H1 (cell line): ENCODE measurements at regions of chr20 and their contacts with region 1.

Region 1: GRCh38 chr20:38730989-38731737 is 6.9 kb downstream of the SLC32A1 start:
- DNase-seq: peak in 1 of 2 experiments; percentile 99
- H3K4me3 ChIP-seq: peak overlapping the region; percentile 18 to 59 (median 36); a peak in 7 of 8 replicates
- H3K27ac ChIP-seq: no peak overlapping the region
- H3K4me1 ChIP-seq: peaks cover 0 to 46% (median 30%) of the 10 kb centered on the region in 4 experiments; a peak in 6 of 7 replicates
- H3K27me3 ChIP-seq: peaks cover 44 to 68% (median 62%) of the 10 kb centered on the region in 4 experiments
- CTCF ChIP-seq: peak; percentile 90 to 99 (median 98)
- EP300 ChIP-seq: peak in 1 of 2 experiments; percentile 40; a peak in 1 of 3 replicates
- POLR2A ChIP-seq: no peak
- RAD21 ChIP-seq: peak; percentile 51 to 61

Region 2: DNA sequence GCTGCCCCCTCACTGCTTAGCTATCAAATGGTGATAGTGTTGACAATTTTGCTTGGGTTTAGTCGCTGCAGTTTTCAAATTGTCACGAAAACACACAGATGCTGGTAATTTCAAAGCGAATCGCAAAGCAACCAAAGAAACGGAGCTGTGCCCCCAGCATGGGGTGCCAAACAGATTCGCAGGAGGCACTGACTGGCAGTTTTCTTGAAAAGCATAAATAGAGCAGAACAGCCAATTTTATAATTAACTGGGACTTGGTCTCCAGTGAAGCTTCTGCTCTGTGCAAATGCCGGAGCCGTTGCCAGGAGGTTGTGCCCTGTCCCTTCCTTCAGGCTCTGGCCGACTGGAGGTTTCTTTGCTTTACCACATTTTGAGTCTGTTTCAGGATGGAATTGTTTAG is 110.7 kb before region 1 on chr20:
- CTCF ChIA-PET with region 1: interaction called, 11 read pairs
- POLR2A ChIA-PET with region 1: no interaction called
- DNase-seq: no peak
- H3K4me3 ChIP-seq: no peak overlapping the region
- H3K27ac ChIP-seq: no peak overlapping the region
- H3K4me1 ChIP-seq: peaks cover 0 to 11% (median 8%) of the 10 kb centered on the region in 4 experiments; a peak in 5 of 7 replicates
- H3K27me3 ChIP-seq: no peaks in the 10 kb centered on the region; a peak in 1 of 7 replicates
- CTCF ChIP-seq: no peak
- EP300 ChIP-seq: no peak
- POLR2A ChIP-seq: no peak
- RAD21 ChIP-seq: no peak

Region 3: GRCh38 chr20:38645980-38646858 is 84.9 kb before region 1 on chr20:
- CTCF ChIA-PET with region 1: interaction called, 235 read pairs
- POLR2A ChIA-PET with region 1: interaction called, 3 read pairs
- DNase-seq: peak; percentile 36 to 98
- H3K4me3 ChIP-seq: peak overlapping the region in 3 of 4 experiments; percentile 30 to 48 (median 44); a peak in 6 of 8 replicates
- H3K27ac ChIP-seq: no peak overlapping the region
- H3K4me1 ChIP-seq: peaks cover 0 to 5% (median 3%) of the 10 kb centered on the region in 4 experiments; a peak in 5 of 7 replicates
- H3K27me3 ChIP-seq: peaks cover 8 to 43% (median 31%) of the 10 kb centered on the region in 4 experiments
- CTCF ChIP-seq: peak; percentile 95 to 97 (median 95)
- EP300 ChIP-seq: no peak
- POLR2A ChIP-seq: no peak
- RAD21 ChIP-seq: peak; percentile 92 to 95

Region 4: DNA sequence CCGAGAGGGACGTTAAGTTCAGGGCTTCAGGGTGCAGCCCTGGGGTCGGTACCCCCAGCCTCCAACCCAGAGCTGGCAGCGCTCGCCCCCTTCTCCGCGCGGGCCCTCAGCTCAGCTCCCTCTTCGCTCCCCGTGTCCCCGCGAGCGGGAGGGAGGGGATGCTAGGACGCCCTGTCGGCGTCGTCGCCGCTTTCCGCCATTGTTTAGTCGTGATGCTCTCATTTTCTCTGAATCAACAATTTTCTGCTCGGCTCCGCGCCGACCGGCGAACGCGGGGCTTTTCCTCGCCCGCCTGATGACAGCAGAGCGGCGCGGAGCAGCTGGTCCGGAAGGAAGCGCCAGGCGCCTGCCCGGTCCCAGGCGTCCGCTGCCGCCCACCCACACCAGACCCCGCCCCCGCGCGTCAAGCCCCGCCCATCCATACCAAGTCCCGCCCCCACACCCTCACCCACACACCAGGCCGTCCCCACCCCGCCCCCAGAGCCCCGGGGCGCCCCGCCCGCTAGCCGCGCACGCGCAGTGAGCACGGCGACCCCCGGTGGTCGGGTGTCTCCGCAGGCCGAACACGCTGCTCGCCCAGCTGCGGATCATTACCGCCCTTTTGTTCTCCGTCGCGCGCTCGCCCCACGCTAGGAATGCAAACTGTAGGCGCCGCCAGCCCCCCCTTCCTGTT is 56.9 kb before region 1 on chr20:
- CTCF ChIA-PET with region 1: interaction called, 42 read pairs
- POLR2A ChIA-PET with region 1: no interaction called
- DNase-seq: peak; percentile 71 to 91
- H3K4me3 ChIP-seq: peak overlapping the region; percentile 60 to 86 (median 69)
- H3K27ac ChIP-seq: no peak overlapping the region
- H3K4me1 ChIP-seq: peaks cover 2 to 17% (median 10%) of the 10 kb centered on the region in 4 experiments; a peak in 5 of 7 replicates
- H3K27me3 ChIP-seq: peaks cover 3 to 38% (median 18%) of the 10 kb centered on the region in 4 experiments
- CTCF ChIP-seq: no peak
- EP300 ChIP-seq: no peak
- POLR2A ChIP-seq: peak in 1 of 2 experiments; percentile 42; a peak in 1 of 3 replicates
- RAD21 ChIP-seq: no peak

Region 5: DNA sequence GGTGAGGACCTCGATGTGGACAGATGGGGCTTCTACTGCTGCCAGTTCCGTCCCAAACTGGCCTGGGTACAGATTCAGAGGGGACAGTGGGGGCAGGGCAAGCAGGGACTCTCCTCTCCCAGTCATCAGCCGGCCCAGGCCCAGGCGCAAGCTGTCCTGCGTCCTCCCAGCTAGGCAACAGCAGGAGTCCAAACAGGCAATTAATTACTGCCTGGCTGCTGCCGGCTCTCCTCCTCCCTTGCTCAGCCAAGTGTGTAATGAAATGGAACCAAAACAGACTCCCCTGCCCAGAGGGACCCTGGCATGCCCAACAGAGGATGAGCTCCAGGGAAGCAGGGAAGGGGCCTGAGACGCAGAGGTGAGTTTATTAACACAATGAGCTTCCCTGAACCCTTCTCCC is 24.7 kb before region 1 on chr20:
- CTCF ChIA-PET with region 1: interaction called, 236 read pairs
- POLR2A ChIA-PET with region 1: no interaction called
- DNase-seq: no peak
- H3K4me3 ChIP-seq: no peak overlapping the region
- H3K27ac ChIP-seq: no peak overlapping the region
- H3K4me1 ChIP-seq: peaks cover 0 to 7% (median 3%) of the 10 kb centered on the region in 4 experiments; a peak in 4 of 7 replicates
- H3K27me3 ChIP-seq: no peaks in the 10 kb centered on the region; a peak in 1 of 7 replicates
- CTCF ChIP-seq: no peak
- EP300 ChIP-seq: no peak
- POLR2A ChIP-seq: no peak
- RAD21 ChIP-seq: no peak

Region 6: GRCh38 chr20:38805502-38805957 is 74.4 kb after region 1 on chr20 and contains the start of gene PPP1R16B:
- CTCF ChIA-PET with region 1: interaction called, 14 read pairs
- POLR2A ChIA-PET with region 1: no interaction called
- DNase-seq: peak in 1 of 2 experiments; percentile 87
- H3K4me3 ChIP-seq: peak within 1 kb of the TSS; percentile 62 to 87 (median 63)
- H3K27ac ChIP-seq: no peak within 1 kb of the TSS
- H3K4me1 ChIP-seq: peaks cover 13 to 18% (median 15%) of the 10 kb centered on the region in 4 experiments
- H3K27me3 ChIP-seq: peaks cover 4 to 25% (median 17%) of the 10 kb centered on the region in 4 experiments; a peak in 6 of 7 replicates
- CTCF ChIP-seq: no peak
- EP300 ChIP-seq: no peak
- POLR2A ChIP-seq: peak in 1 of 2 experiments; percentile 73; a peak in 1 of 3 replicates
- RAD21 ChIP-seq: no peak
- total RNA-seq, gene PPP1R16B: 8.9 and 9.7 TPM in 2 replicates